ENCODE measurements at regions of chr10 and their contacts with region 1.

Region 1: GRCh38 chr10:110547139-110547761 is 20.2 kb upstream of the SMC3 start:
- DNase-seq: no peak
- ATAC-seq: peak; percentile 84
- H3K4me3 Mint-ChIP-seq: no peak overlapping the region
- H3K27ac Mint-ChIP-seq: no peak overlapping the region
- H3K4me1 Mint-ChIP-seq: peaks cover 11% of the 10 kb centered on the region
- H3K27me3 Mint-ChIP-seq: peaks cover 32% of the 10 kb centered on the region

Region 2: GRCh38 chr10:110311357-110311949 is 235.8 kb before region 1 on chr10:
- CTCF ChIA-PET with region 1: interaction called, 52 read pairs
- DNase-seq: peak; percentile 56
- ATAC-seq: peak; percentile 72
- H3K4me3 Mint-ChIP-seq: no peak overlapping the region
- H3K27ac Mint-ChIP-seq: peak overlapping the region; percentile 50
- H3K4me1 Mint-ChIP-seq: peaks cover 44% of the 10 kb centered on the region
- H3K27me3 Mint-ChIP-seq: no peaks in the 10 kb centered on the region

Region 3: GRCh38 chr10:110497438-110498086 is 49.7 kb before region 1 on chr10 and contains the start of gene DUSP5:
- CTCF ChIA-PET with region 1: interaction called, 14 read pairs
- DNase-seq: peak; percentile 96
- ATAC-seq: peak; percentile 67
- H3K4me3 Mint-ChIP-seq: peak within 1 kb of the TSS; percentile 99
- H3K27ac Mint-ChIP-seq: peak within 1 kb of the TSS; percentile 97
- H3K4me1 Mint-ChIP-seq: peaks cover 52% of the 10 kb centered on the region
- H3K27me3 Mint-ChIP-seq: no peaks in the 10 kb centered on the region
- total RNA-seq, gene DUSP5: 102 to 223 TPM

Region 4: DNA sequence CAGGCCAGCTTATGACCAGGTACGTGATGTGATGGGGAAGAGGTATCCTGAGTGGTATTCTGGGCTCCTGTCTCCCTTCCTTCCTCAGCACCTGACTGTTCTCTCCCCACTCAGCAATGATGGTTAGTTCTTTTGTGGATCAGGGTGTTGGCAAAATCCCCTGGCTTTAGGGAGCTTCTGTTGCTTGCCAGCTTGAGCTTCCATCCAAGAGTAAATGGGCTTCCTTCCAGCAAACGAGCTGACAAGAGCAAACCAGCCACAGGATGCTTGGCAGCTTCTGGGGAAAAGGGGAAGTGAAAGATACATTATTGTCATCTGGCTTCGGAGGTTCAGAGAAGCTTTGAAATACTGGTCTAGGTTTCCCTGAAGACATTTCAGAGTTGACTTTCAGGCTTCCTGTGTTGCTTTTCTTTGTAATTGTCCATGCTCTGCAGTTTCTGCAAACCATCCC is 44.4 kb before region 1 on chr10:
- CTCF ChIA-PET with region 1: interaction called, 14 read pairs
- DNase-seq: no peak
- ATAC-seq: no peak
- H3K4me3 Mint-ChIP-seq: peak overlapping the region; percentile 99
- H3K27ac Mint-ChIP-seq: peak overlapping the region; percentile 97
- H3K4me1 Mint-ChIP-seq: peaks cover 76% of the 10 kb centered on the region
- H3K27me3 Mint-ChIP-seq: no peaks in the 10 kb centered on the region

Measured in activated CD8-positive, alpha-beta memory T cell treated with anti-CD3 and anti-CD28 coated beads, Interleukin-2, amount 10 ng/mL, durations not matched to agents 7 days and 5 days (primary cell).